A549 (cell line): ENCODE measurements at regions of chr2 and their contacts with region 1.

Region 1: GRCh38 chr2:127695491-127696472 is 5.5 kb upstream of the SFT2D3 start:
- DNase-seq: peak; percentile 69 to 80
- ATAC-seq: peak; percentile 84 to 93
- H3K4me3 ChIP-seq: peak overlapping the region; percentile 39
- H3K27ac ChIP-seq: peak overlapping the region; percentile 64 to 83
- H3K4me1 ChIP-seq: peaks cover 19% of the 10 kb centered on the region
- CTCF ChIP-seq: peak; percentile 88
- EP300 ChIP-seq: no peak
- POLR2A ChIP-seq: no peak; the same call in 1 of the 2 replicates
- RAD21 ChIP-seq: peak; percentile 68 to 75

Region 2: DNA sequence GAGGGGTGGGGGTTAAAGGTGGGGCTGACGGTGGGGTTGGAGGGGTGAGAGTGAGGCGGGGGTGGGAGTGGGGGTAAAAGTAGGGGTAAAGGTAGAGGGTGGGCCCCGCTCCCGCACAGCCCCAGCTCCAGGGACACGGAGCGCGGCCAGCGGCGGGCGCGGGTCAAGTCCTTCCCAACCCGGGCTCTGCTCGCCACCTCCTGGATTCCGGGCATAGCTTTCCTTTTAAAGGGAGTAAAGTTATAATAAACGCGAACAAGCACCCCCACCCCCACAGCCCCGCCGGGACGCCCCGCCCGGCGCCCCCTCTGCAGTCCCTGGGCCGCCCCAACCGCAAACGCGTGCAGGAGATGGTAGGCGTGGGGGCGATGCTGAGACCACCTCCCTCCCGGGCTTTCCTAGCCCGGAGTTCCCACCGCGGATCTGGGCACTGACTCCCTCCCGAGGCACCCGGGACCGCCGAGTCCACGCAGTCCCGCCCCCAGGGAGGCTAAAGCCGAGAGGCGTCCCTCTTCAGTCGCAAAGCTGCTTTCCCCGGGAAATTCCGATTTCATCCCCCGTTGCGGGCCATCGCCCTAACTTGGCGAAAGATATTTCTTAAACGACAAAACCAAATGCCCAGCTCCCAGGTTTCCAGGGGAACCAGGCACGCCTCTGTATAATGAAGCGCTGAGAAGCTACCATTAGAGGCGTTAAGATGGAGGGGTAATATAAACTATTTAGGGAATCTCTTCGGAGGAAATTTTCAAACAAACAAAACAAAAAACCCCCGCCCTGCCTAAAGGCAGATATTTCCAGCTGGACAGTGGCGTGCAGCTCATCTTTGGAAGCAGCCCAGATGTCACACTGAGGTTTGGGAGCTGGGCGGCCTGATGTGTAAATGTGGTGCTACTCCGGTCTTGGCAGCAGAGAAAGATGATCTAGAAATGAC is 20.2 kb before region 1 on chr2 and contains the start of gene LIMS2:
- CTCF ChIA-PET with region 1: interaction called, 10 read pairs
- POLR2A ChIA-PET with region 1: interaction called, 3 read pairs
- DNase-seq: peak; percentile 48 to 49
- ATAC-seq: peak; percentile 72 to 83
- H3K4me3 ChIP-seq: peak within 1 kb of the TSS; percentile 77
- H3K27ac ChIP-seq: peak within 1 kb of the TSS; percentile 67 to 90
- H3K4me1 ChIP-seq: peaks cover 15% of the 10 kb centered on the region
- CTCF ChIP-seq: peak; percentile 29; the same call in 2 of the 3 replicates
- EP300 ChIP-seq: no peak
- POLR2A ChIP-seq: no peak
- RAD21 ChIP-seq: peak; percentile 28 to 57; a peak in 2 of 5 replicates
- polyA plus RNA-seq, gene LIMS2: 1.2 TPM in 2 replicates

Region 3: GRCh38 chr2:127683757-127684156 is 12.0 kb before region 1 on chr2:
- CTCF ChIA-PET with region 1: interaction called, 19 read pairs
- POLR2A ChIA-PET with region 1: no interaction called
- DNase-seq: no peak
- ATAC-seq: no peak
- H3K4me3 ChIP-seq: no peak overlapping the region
- H3K27ac ChIP-seq: no peak overlapping the region
- H3K4me1 ChIP-seq: no peaks in the 10 kb centered on the region
- CTCF ChIP-seq: no peak
- EP300 ChIP-seq: no peak
- POLR2A ChIP-seq: no peak
- RAD21 ChIP-seq: no peak